Aorta (tissue), 5 donors: ENCODE measurements at regions of chr10 and their contacts with region 1.

Region 1: GRCh38 chr10:122213766-122214165 is 57.3 kb upstream of the BTBD16 start:
- DNase-seq: peak in 1 of 2 donors; percentile 72
- ATAC-seq: no peak
- H3K4me3 ChIP-seq: no peak overlapping the region
- H3K27ac ChIP-seq: no peak overlapping the region
- H3K4me1 ChIP-seq: no peaks in the 10 kb centered on the region
- H3K27me3 ChIP-seq: no peaks in the 10 kb centered on the region

Region 2: DNA sequence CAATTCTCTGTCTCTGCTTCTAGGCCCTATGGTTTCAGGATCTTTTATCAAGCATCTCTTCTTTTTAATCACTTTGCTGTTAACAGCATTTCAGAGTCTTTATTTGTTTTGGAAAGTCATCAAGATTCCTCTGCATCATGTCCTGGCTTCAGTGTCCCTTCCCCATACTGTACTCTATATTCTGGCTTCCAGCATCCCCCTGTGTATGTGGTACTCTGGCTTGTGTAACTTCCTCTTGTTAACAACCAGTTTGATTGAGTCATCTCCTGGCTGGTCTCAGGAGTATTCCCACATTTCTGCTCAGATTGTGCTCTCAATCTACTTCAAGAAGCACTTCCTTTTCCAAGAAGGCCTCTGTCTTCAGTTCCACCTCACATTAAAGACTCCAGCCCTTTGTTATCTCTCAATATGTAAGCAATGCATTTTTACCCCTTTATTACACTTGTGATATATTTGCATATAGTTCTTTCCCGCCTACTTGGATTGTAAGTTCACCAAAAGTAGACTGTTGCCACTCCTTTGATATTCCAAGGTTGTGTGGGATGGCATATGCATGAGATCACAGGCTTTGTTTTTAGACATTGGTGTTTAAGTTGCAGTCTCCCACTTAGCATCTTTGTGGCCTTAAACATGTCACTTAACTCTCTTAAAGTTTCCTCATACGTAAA is 270.9 kb before region 1 on chr10:
- intact Hi-C with region 1: no loop called
- DNase-seq: no peak
- ATAC-seq: peak; percentile 76
- H3K4me3 ChIP-seq: no peak overlapping the region
- H3K27ac ChIP-seq: no peak overlapping the region
- H3K4me1 ChIP-seq: peaks cover 3% of the 10 kb centered on the region in 2 donors
- H3K27me3 ChIP-seq: no peaks in the 10 kb centered on the region

Region 3: GRCh38 chr10:122029499-122030199 is 184.1 kb before region 1 on chr10:
- intact Hi-C with region 1: no loop called
- DNase-seq: peak in 1 of 2 donors; percentile 68
- ATAC-seq: peak; percentile 57
- H3K4me3 ChIP-seq: no peak overlapping the region
- H3K27ac ChIP-seq: peak overlapping the region; percentile 17 to 96
- H3K4me1 ChIP-seq: peaks cover 2 to 11% of the 10 kb centered on the region in 2 donors
- H3K27me3 ChIP-seq: no peaks in the 10 kb centered on the region

Region 4: GRCh38 chr10:122164815-122165483 is 48.8 kb before region 1 on chr10:
- intact Hi-C with region 1: loop called in 1 of 2 experiments (anchors 5 kb)
- DNase-seq: no peak
- ATAC-seq: no peak
- H3K4me3 ChIP-seq: no peak overlapping the region
- H3K27ac ChIP-seq: no peak overlapping the region
- H3K4me1 ChIP-seq: peaks cover 0 to 11% of the 10 kb centered on the region in 2 donors
- H3K27me3 ChIP-seq: no peaks in the 10 kb centered on the region

Region 5: DNA sequence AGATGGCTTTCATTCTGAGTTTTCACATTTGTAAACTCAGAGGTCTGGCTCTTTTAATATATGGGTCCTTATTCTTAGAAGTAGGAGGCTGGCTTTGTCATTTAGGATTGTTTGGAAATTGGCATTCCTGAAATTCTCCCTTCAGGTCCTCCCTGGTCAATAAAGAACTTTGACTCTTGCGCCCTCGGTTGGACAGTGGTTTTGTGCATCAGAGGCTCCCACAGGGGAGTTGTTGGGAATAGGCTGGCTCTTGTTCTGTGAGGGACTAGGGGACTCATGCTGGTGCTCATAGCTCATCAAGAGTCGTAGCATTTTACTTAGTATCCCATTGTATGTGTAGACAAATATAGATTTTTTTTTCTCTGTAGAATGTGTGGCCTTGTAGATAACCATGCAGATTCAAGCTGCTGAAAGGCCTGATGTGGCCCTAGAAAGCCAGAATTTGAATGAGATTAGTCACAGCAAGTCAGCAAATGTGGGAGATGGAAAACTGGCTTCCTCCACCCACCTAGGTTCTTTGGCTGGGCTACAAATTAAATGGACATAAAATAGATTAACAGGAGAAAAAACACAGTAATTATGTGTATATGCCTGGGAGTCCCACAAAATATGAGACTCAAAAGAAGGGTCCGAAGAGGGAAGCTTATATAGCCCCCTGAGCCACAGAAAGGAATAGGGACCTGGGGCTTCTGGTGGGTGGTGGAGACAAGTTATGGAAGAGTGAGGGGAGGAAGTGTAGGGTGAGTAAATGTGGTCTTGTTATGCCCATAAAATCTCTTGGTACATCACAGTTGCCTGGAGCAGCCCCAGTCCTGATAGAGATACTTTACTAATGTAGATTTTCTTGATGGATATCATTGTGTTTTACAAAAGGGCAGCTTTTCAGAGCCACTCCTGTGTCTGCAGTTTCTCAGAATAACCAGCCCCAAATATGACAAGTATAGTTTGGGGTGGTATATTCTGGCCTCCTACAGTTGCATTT is 37.2 kb before region 1 on chr10:
- intact Hi-C with region 1: no loop called
- DNase-seq: no peak
- ATAC-seq: no peak
- H3K4me3 ChIP-seq: no peak overlapping the region
- H3K27ac ChIP-seq: no peak overlapping the region
- H3K4me1 ChIP-seq: peaks cover 0 to 3% of the 10 kb centered on the region in 2 donors
- H3K27me3 ChIP-seq: no peaks in the 10 kb centered on the region